ENCODE measurements at regions of chrX and their contacts with region 1.

Region 1: GRCh38 chrX:74343343-74344279 is 39.6 kb downstream of the ZCCHC13 start:
- DNase-seq: peak; percentile 71
- ATAC-seq: peak; percentile 93
- H3K4me3 Mint-ChIP-seq: peak overlapping the region; percentile 10; the same call in 1 of the 2 replicates
- H3K27ac Mint-ChIP-seq: peak overlapping the region; percentile 72; the same call in 1 of the 2 replicates
- H3K4me1 Mint-ChIP-seq: peaks cover 22% of the 10 kb centered on the region
- H3K27me3 Mint-ChIP-seq: no peaks in the 10 kb centered on the region
- CTCF ChIP-seq: no peak

Region 2: DNA sequence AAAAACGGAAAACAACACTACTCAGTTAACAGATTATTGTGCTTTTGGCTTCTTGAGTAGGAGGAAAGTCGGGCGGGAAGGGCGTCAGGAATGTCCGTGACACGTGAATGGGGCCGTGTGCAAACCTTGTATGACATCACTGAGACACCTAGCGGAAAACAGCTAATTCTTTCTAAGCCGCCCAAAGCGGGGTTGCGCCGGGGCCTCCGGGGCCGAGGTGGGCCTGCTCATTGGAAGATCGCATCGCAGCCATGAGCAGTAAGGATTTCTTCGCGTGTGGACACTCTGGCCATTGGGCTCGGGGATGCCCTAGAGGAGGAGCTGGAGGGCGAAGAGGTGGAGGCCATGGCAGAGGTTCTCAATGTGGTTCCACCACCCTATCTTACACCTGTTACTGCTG is 39.6 kb before region 1 on chrX and contains the start of gene ZCCHC13:
- CTCF ChIA-PET with region 1: no interaction called
- POLR2A ChIA-PET with region 1: no interaction called
- DNase-seq: no peak
- ATAC-seq: no peak
- H3K4me3 Mint-ChIP-seq: no peak within 1 kb of the TSS
- H3K27ac Mint-ChIP-seq: no peak within 1 kb of the TSS
- H3K4me1 Mint-ChIP-seq: peaks cover 16% of the 10 kb centered on the region; the same call in 1 of the 2 replicates
- H3K27me3 Mint-ChIP-seq: no peaks in the 10 kb centered on the region
- CTCF ChIP-seq: no peak
- total RNA-seq, gene ZCCHC13: not detected in 3 replicates

Region 3: GRCh38 chrX:74325130-74326059 is 18.2 kb before region 1 on chrX:
- CTCF ChIA-PET with region 1: interaction called, 31 read pairs
- POLR2A ChIA-PET with region 1: interaction called, 4 read pairs
- DNase-seq: peak; percentile 44
- ATAC-seq: peak; percentile 84
- H3K4me3 Mint-ChIP-seq: no peak overlapping the region; the same call in 1 of the 2 replicates
- H3K27ac Mint-ChIP-seq: peak overlapping the region; percentile 87
- H3K4me1 Mint-ChIP-seq: peaks cover 50% of the 10 kb centered on the region
- H3K27me3 Mint-ChIP-seq: peaks cover 18% of the 10 kb centered on the region
- CTCF ChIP-seq: no peak

Region 4: DNA sequence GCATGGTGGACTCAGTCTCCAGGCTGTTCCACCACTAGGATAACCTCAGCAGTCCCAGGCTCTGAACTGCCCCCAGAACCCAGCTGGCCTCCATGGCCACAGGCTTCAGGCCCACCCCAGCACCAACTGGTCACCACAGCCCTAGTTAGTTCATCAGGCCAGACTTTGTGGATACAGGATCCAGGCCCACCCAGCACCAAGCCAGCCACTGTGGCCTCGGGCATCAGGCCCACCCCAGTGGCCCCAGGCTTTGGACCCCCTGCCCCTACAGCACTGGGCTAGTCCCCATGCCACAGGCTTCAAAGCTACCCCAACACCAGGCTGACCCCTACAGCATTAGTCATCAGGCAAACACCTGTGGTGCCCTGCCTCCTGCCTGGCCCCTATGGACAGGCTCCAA is 10.4 kb after region 1 on chrX:
- CTCF ChIA-PET with region 1: no interaction called
- POLR2A ChIA-PET with region 1: no interaction called
- DNase-seq: no peak
- ATAC-seq: no peak
- H3K4me3 Mint-ChIP-seq: no peak overlapping the region
- H3K27ac Mint-ChIP-seq: no peak overlapping the region
- H3K4me1 Mint-ChIP-seq: no peaks in the 10 kb centered on the region
- H3K27me3 Mint-ChIP-seq: no peaks in the 10 kb centered on the region
- CTCF ChIP-seq: no peak

Region 5: DNA sequence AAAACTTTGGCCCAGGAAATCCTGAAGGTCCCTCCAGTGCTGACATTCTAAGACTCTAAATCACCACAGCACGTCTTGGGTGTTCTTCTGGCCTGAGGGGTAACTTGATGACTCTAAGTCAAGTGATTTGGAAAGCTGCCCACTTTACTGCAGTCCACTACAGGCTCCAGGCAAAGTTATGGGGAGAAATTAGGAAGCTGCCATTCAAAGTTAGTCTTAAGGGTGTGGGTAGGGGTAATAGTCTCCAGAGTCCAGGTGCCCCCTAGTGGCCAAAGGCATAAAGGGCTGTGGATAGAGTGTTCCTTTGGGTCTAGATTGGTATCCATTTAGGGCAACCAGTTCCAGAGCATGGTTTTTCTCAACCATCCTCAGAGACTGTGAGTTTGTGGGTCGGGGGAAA is 39.0 kb after region 1 on chrX:
- CTCF ChIA-PET with region 1: interaction called, 11 read pairs
- POLR2A ChIA-PET with region 1: no interaction called
- DNase-seq: peak; percentile 67
- ATAC-seq: peak; percentile 92
- H3K4me3 Mint-ChIP-seq: no peak overlapping the region
- H3K27ac Mint-ChIP-seq: no peak overlapping the region
- H3K4me1 Mint-ChIP-seq: peaks cover 11% of the 10 kb centered on the region
- H3K27me3 Mint-ChIP-seq: no peaks in the 10 kb centered on the region; the same call in 1 of the 2 replicates
- CTCF ChIP-seq: peak; percentile 62

Measured in WTC11 (cell line).